ENCODE measurements at regions of chr21 and their contacts with region 1.

Region 1: GRCh38 chr21:33199516-33200217 is 30.1 kb upstream of the IFNAR2 start:
- DNase-seq: peak; percentile 85
- H3K27ac ChIP-seq: no peak overlapping the region
- CTCF ChIP-seq: peak; percentile 79

Region 2: DNA sequence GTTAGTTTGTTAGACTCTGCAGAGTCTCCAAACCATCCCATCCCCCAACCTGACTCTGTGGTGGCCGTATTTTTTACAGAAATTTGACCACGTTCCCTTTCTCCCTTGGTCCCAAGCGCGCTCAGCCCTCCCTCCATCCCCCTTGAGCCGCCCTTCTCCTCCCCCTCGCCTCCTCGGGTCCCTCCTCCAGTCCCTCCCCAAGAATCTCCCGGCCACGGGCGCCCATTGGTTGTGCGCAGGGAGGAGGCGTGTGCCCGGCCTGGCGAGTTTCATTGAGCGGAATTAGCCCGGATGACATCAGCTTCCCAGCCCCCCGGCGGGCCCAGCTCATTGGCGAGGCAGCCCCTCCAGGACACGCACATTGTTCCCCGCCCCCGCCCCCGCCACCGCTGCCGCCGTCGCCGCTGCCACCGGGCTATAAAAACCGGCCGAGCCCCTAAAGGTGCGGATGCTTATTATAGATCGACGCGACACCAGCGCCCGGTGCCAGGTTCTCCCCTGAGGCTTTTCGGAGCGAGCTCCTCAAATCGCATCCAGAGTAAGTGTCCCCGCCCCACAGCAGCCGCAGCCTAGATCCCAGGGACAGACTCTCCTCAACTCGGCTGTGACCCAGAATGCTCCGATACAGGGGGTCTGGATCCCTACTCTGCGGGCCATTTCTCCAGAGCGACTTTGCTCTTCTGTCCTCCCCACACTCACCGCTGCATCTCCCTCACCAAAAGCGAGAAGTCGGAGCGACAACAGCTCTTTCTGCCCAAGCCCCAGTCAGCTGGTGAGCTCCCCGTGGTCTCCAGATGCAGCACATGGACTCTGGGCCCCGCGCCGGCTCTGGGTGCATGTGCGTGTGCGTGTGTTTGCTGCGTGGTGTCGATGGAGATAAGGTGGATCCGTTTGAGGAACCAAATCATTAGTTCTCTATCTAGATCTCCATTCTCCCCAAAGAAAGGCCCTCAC is 173.9 kb before region 1 on chr21 and contains the start of gene OLIG2:
- CTCF ChIA-PET with region 1: no interaction called
- POLR2A ChIA-PET with region 1: no interaction called
- DNase-seq: no peak
- H3K27ac ChIP-seq: no peak within 1 kb of the TSS
- CTCF ChIP-seq: no peak

Region 3: DNA sequence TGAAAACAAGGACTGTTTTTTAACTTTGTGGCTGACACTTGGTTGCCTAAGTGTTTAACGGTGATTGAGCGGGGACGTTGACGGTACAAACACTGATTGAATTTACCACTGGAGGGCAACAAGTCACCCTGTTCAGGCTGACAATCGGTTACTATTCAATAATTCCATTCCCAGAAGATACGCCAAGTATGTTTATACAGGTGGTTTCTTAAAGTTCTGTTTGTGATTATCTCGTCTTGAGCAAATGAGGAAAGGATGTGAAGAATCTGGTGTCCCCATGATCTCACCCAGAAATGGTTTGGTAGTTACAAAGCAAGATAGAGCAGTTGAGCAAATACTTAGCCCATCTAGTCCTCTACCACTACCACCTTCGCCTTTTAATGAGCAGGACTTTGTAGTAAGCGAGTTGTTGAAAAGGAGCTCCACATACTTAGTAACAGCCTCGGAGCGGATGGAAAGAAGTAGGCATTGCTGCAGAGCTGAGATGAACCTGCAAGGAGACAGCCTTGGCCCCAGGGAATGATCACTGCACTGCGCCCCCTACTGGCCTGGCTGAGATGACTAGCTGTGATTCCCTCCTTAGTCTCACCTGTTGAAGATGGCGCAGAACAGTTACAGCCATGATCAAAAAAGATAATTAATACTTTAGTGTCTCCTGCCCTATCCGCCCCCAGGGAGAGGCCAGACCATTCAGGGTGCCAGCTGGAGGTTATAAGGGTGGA is 161.4 kb after region 1 on chr21:
- CTCF ChIA-PET with region 1: interaction called, 12 read pairs
- POLR2A ChIA-PET with region 1: no interaction called
- DNase-seq: peak; percentile 68
- H3K27ac ChIP-seq: peak overlapping the region; percentile 74
- CTCF ChIP-seq: peak; percentile 76

Region 4: GRCh38 chr21:33608559-33608958 is 408.9 kb after region 1 on chr21:
- CTCF ChIA-PET with region 1: no interaction called
- POLR2A ChIA-PET with region 1: no interaction called
- DNase-seq: no peak
- H3K27ac ChIP-seq: no peak overlapping the region
- CTCF ChIP-seq: no peak

Measured in RWPE1 (cell line).